Activated naive CD4-positive, alpha-beta T cell treated with anti-CD3 and anti-CD28 coated beads for 36 hours (primary cell): ENCODE measurements at regions of chr3 and their contacts with region 1.

Region 1: GRCh38 chr3:34106879-34107278 is 308.4 kb downstream of the PDCD6IP start:
- DNase-seq: peak; percentile 57
- H3K4me3 Mint-ChIP-seq: no peak overlapping the region
- H3K27ac Mint-ChIP-seq: no peak overlapping the region
- H3K4me1 Mint-ChIP-seq: no peaks in the 10 kb centered on the region
- H3K27me3 Mint-ChIP-seq: peaks cover 4% of the 10 kb centered on the region

Region 2: GRCh38 chr3:34140616-34141015 is 33.7 kb after region 1 on chr3:
- CTCF ChIA-PET with region 1: no interaction called
- intact Hi-C with region 1: no loop called
- DNase-seq: no peak
- H3K4me3 Mint-ChIP-seq: no peak overlapping the region
- H3K27ac Mint-ChIP-seq: no peak overlapping the region
- H3K4me1 Mint-ChIP-seq: no peaks in the 10 kb centered on the region
- H3K27me3 Mint-ChIP-seq: no peaks in the 10 kb centered on the region

Region 3: GRCh38 chr3:34683851-34684250 is 577.0 kb after region 1 on chr3:
- CTCF ChIA-PET with region 1: interaction called, 6 read pairs
- intact Hi-C with region 1: loop called (anchors 2 kb)
- DNase-seq: peak; percentile 67
- H3K4me3 Mint-ChIP-seq: no peak overlapping the region
- H3K27ac Mint-ChIP-seq: no peak overlapping the region
- H3K4me1 Mint-ChIP-seq: no peaks in the 10 kb centered on the region
- H3K27me3 Mint-ChIP-seq: no peaks in the 10 kb centered on the region

Region 4: DNA sequence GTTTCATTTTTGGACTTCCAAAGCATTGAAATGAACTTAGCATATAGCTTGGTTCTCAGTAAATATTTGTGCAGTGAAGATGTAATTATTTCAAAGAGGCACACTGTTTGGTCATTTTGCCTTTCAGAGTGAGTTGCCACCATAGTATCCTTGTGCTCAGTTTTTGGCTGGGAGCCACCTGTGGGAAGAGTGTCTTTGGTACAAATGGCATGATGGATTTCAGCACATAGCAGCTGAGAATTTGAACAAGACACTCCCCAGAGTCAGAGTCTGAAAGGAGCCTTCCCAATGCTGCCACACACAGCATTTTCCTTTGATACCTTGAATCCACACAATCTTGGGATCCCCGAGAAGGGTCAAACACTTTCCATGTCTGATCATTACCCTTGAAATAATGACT is 635.3 kb after region 1 on chr3:
- CTCF ChIA-PET with region 1: no interaction called
- intact Hi-C with region 1: no loop called
- DNase-seq: no peak
- H3K4me3 Mint-ChIP-seq: no peak overlapping the region
- H3K27ac Mint-ChIP-seq: no peak overlapping the region
- H3K4me1 Mint-ChIP-seq: no peaks in the 10 kb centered on the region
- H3K27me3 Mint-ChIP-seq: no peaks in the 10 kb centered on the region